Naive thymus-derived CD4-positive, alpha-beta T cell (primary cell): ENCODE measurements at regions of chr3 and their contacts with region 1.

Region 1: DNA sequence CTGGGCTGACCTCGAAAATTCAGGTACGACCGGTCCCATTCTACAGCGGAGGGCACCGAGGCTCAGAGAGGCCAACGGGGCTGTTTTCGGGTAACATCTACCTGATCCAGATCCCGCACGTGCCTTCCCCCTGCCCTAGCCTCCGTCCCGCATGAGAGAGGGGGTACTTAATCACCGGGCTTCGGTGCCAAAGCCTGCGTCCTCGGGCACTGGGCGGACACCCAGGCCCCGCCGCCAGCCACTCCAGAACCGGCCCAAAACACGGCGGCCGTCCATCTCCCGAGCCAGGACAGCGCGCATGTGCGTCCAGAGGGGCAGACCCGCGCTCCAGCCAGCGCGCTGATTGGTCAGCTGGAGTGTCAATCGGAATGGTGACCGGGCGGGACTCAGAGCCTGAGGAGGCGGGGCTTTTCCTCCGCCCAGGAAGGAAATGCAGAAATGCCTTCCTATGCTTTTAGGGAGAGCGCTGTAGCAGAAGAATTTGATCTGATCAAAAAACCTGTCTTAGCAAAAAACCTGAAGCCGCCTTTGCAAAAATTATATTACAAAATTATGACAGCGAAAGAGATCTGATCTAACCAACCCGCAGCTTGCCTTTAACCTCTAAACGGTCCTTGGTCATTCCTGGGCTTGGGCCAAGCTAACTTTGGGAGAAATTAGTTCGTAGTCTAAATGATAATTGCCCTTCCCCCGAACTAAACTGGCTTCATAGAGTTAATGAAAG is at the start of gene RPUSD3:
- DNase-seq: peak; percentile 90 to 99 (median 94)
- ATAC-seq: peak; percentile 100
- H3K4me3 ChIP-seq: peak within 1 kb of the TSS; percentile 83
- H3K4me3 Mint-ChIP-seq: peak within 1 kb of the TSS; percentile 93 to 100 (median 97)
- H3K27ac ChIP-seq: peak within 1 kb of the TSS; percentile 82
- H3K27ac Mint-ChIP-seq: peak within 1 kb of the TSS; percentile 68 to 94 (median 91)
- H3K4me1 ChIP-seq: peaks cover 4 to 5% of the 10 kb centered on the region in 2 donors
- H3K4me1 Mint-ChIP-seq: peaks cover 12 to 40% (median 23%) of the 10 kb centered on the region in 7 donors
- H3K27me3 ChIP-seq: no peaks in the 10 kb centered on the region
- H3K27me3 Mint-ChIP-seq: no peaks in the 10 kb centered on the region
- total RNA-seq, gene RPUSD3: 17.7 to 61.2 (median 58.0) TPM

Region 2: GRCh38 chr3:9749645-9750555 is 94.0 kb before region 1 on chr3 and contains the start of gene OGG1:
- CTCF ChIA-PET with region 1: no interaction called
- POLR2A ChIA-PET with region 1: no interaction called
- intact Hi-C with region 1: loop called (anchors 1 kb)
- DNase-seq: peak; percentile 77 to 95 (median 94)
- ATAC-seq: peak; percentile 97
- H3K4me3 ChIP-seq: peak within 1 kb of the TSS; percentile 84
- H3K4me3 Mint-ChIP-seq: peak within 1 kb of the TSS; percentile 93 to 98 (median 96)
- H3K27ac ChIP-seq: peak within 1 kb of the TSS; percentile 73
- H3K27ac Mint-ChIP-seq: peak within 1 kb of the TSS; percentile 86 to 96 (median 93)
- H3K4me1 ChIP-seq: peaks cover 13 to 22% of the 10 kb centered on the region in 2 donors
- H3K4me1 Mint-ChIP-seq: peaks cover 30 to 58% (median 47%) of the 10 kb centered on the region in 7 donors
- H3K27me3 ChIP-seq: no peaks in the 10 kb centered on the region
- H3K27me3 Mint-ChIP-seq: no peaks in the 10 kb centered on the region
- total RNA-seq, gene OGG1: 18.8 to 42.9 (median 31.6) TPM

Region 3: GRCh38 chr3:9915254-9916141 is 71.6 kb after region 1 on chr3:
- CTCF ChIA-PET with region 1: no interaction called
- POLR2A ChIA-PET with region 1: interaction called, 3 read pairs
- intact Hi-C with region 1: loop called in 1 of 2 experiments (anchors 2 kb)
- DNase-seq: peak in 6 of 9 donors; percentile 16 to 52 (median 24)
- ATAC-seq: peak; percentile 63
- H3K4me3 ChIP-seq: peak overlapping the region; percentile 48
- H3K4me3 Mint-ChIP-seq: peak overlapping the region; percentile 72 to 86 (median 79)
- H3K27ac ChIP-seq: peak overlapping the region; percentile 8
- H3K27ac Mint-ChIP-seq: no peak overlapping the region
- H3K4me1 ChIP-seq: peaks cover 0 to 11% of the 10 kb centered on the region in 2 donors
- H3K4me1 Mint-ChIP-seq: peaks cover 0 to 18% (median 8%) of the 10 kb centered on the region in 7 donors
- H3K27me3 ChIP-seq: no peaks in the 10 kb centered on the region
- H3K27me3 Mint-ChIP-seq: no peaks in the 10 kb centered on the region

Region 4: GRCh38 chr3:9986237-9986725 is 142.4 kb after region 1 on chr3:
- CTCF ChIA-PET with region 1: no interaction called
- POLR2A ChIA-PET with region 1: no interaction called
- intact Hi-C with region 1: loop called in 1 of 2 experiments (anchors 1 kb)
- DNase-seq: no peak
- ATAC-seq: peak; percentile 52
- H3K4me3 ChIP-seq: peak overlapping the region; percentile 100
- H3K4me3 Mint-ChIP-seq: peak overlapping the region; percentile 95 to 99 (median 98)
- H3K27ac ChIP-seq: peak overlapping the region; percentile 96
- H3K27ac Mint-ChIP-seq: peak overlapping the region; percentile 95 to 100 (median 98)
- H3K4me1 ChIP-seq: peaks cover 13 to 15% of the 10 kb centered on the region in 2 donors
- H3K4me1 Mint-ChIP-seq: peaks cover 0 to 48% (median 35%) of the 10 kb centered on the region in 7 donors
- H3K27me3 ChIP-seq: no peaks in the 10 kb centered on the region
- H3K27me3 Mint-ChIP-seq: no peaks in the 10 kb centered on the region

Region 5: DNA sequence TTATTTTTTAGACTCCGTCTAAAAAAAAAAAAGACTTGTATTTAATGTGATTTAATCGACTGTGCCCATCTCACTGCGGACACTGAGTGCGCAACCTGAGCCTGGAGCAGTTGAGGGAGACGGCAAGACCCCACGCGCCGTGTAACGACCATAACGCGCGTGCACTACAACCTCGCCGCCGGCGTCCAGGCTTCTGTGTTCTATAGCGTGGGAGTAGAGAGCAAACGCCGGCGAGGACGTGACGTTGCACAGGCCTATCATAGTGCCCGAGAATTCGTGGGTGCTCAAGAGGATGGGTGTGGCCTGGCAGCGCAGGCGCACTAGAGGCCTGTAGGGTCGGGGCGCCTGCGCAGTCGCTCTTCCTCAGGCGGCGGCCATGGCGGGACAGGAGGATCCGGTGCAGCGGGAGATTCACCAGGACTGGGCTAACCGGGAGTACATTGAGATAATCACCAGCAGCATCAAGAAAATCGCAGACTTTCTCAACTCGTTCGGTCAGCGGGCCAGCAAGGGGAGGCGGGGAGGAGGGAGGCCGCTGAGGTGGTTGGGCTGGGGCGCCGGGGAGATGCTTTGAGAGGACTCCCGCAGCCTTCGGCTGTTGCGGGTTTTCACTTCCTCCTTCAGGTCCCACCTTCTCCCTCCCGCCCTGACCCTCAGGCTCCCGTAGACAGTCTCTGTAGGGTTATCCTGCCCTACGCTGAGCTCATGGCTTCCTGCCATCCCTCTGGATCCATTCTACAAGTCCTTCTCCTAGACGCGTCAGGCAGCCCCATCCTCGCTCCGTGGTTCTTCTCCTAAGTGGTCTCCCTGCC is 271.7 kb after region 1 on chr3 and contains the start of gene BRK1:
- CTCF ChIA-PET with region 1: no interaction called
- POLR2A ChIA-PET with region 1: interaction called, 3 read pairs
- intact Hi-C with region 1: loop called in 1 of 2 experiments (anchors 5 kb)
- DNase-seq: peak; percentile 73 to 94 (median 91)
- ATAC-seq: peak; percentile 99
- H3K4me3 ChIP-seq: peak within 1 kb of the TSS; percentile 83
- H3K4me3 Mint-ChIP-seq: peak within 1 kb of the TSS; percentile 91 to 100 (median 98)
- H3K27ac ChIP-seq: peak within 1 kb of the TSS; percentile 85
- H3K27ac Mint-ChIP-seq: peak within 1 kb of the TSS; percentile 92 to 99 (median 98)
- H3K4me1 ChIP-seq: peaks cover 11 to 13% of the 10 kb centered on the region in 2 donors
- H3K4me1 Mint-ChIP-seq: peaks cover 23 to 48% (median 40%) of the 10 kb centered on the region in 7 donors
- H3K27me3 ChIP-seq: no peaks in the 10 kb centered on the region
- H3K27me3 Mint-ChIP-seq: peaks cover 0 to 2% (median 0%) of the 10 kb centered on the region in 5 donors
- total RNA-seq, gene BRK1: 40.9 to 117 (median 65.8) TPM

Region 6: GRCh38 chr3:10248184-10249080 is 404.6 kb after region 1 on chr3 and contains the start of gene TATDN2:
- CTCF ChIA-PET with region 1: no interaction called
- POLR2A ChIA-PET with region 1: no interaction called
- intact Hi-C with region 1: loop called in 1 of 2 experiments (anchors 1 kb)
- DNase-seq: peak; percentile 80 to 91 (median 88)
- ATAC-seq: peak; percentile 98
- H3K4me3 ChIP-seq: peak within 1 kb of the TSS; percentile 99
- H3K4me3 Mint-ChIP-seq: peak within 1 kb of the TSS; percentile 96 to 100 (median 99)
- H3K27ac ChIP-seq: peak within 1 kb of the TSS; percentile 80
- H3K27ac Mint-ChIP-seq: peak within 1 kb of the TSS; percentile 91 to 97 (median 95)
- H3K4me1 ChIP-seq: peaks cover 28 to 30% of the 10 kb centered on the region in 2 donors
- H3K4me1 Mint-ChIP-seq: peaks cover 44 to 63% (median 52%) of the 10 kb centered on the region in 7 donors
- H3K27me3 ChIP-seq: no peaks in the 10 kb centered on the region
- H3K27me3 Mint-ChIP-seq: no peaks in the 10 kb centered on the region
- total RNA-seq, gene TATDN2: 52.9 to 88.8 (median 71.6) TPM